ENCODE measurements at regions of chrX and their contacts with region 1.

Region 1: DNA sequence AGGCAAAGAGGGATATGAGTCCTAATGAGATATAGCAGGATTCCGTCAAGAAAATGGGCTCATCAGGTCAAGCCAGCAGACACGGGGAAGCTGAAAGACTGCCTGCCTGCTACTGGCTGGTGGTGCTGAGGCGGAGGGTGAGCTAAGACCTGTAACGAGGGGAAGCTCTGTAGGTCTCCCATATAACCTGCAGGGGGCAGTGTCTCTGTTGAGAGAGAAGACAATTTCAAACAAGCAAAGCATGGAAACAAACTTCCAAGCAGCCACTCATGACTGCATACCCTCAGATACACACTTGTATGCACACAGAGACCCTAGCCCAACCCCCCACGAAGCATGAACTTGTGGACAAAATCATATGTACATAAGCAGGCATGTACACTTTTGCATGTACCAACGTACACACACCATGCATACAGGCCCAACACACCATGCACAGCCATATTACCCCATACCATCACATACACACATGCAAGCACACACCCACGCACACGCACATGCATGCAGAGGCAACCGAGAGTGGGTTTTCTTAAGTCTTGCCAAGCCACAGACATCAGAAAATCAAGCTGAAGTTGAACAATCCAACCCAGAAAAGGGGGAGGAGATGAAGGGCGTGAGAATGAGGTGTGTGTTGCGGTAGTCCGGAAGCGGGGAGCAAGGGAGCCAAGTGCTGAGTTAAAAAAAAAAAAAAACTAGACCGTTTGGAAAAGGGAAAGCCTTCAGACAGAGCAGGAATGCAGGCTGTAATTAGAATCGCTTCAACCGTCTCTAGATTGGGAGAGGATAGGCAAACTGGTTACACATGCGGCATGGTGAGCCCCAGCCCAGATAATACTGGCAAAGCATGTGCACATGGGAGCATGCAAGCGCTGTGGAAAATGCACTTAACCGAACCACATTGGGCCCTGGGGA is 71.0 kb downstream of the PJA1 start:
- DNase-seq: no peak
- H3K4me3 ChIP-seq: no peak overlapping the region
- CTCF ChIP-seq: peak; percentile 50

Region 2: GRCh38 chrX:69222103-69223090 is 128.2 kb after region 1 on chrX:
- CTCF ChIA-PET with region 1: interaction called, 15 read pairs
- POLR2A ChIA-PET with region 1: no interaction called
- DNase-seq: no peak
- H3K4me3 ChIP-seq: no peak overlapping the region
- CTCF ChIP-seq: peak; percentile 79

Measured in AG04449 (cell line).